PC-9 (cell line): ENCODE measurements at regions of chr12 and their contacts with region 1.

Region 1: DNA sequence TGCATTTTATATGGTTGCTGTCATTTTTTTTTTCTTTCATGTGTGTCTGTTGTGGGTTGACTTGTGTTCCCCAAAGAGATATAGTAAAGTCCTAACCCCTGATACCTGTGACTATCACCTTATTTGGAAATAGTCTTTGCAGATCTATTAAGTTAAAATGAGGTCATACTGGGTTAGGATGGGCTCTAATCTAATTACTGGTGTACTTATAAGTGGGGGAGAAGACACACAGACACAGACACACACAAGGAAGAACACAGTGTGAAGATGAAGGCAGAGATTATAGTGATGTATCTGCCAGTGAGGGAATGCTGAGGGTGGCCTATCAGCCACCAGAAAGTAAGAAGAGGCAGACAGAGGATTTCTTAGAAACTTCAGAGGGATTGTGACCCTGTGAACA is 318.4 kb upstream of the ATP2B1 start:
- DNase-seq: no peak
- H3K4me3 ChIP-seq: no peak overlapping the region
- H3K27ac ChIP-seq: no peak overlapping the region
- H3K4me1 ChIP-seq: peaks cover 43% of the 10 kb centered on the region
- H3K27me3 ChIP-seq: no peaks in the 10 kb centered on the region
- CTCF ChIP-seq: no peak

Region 2: DNA sequence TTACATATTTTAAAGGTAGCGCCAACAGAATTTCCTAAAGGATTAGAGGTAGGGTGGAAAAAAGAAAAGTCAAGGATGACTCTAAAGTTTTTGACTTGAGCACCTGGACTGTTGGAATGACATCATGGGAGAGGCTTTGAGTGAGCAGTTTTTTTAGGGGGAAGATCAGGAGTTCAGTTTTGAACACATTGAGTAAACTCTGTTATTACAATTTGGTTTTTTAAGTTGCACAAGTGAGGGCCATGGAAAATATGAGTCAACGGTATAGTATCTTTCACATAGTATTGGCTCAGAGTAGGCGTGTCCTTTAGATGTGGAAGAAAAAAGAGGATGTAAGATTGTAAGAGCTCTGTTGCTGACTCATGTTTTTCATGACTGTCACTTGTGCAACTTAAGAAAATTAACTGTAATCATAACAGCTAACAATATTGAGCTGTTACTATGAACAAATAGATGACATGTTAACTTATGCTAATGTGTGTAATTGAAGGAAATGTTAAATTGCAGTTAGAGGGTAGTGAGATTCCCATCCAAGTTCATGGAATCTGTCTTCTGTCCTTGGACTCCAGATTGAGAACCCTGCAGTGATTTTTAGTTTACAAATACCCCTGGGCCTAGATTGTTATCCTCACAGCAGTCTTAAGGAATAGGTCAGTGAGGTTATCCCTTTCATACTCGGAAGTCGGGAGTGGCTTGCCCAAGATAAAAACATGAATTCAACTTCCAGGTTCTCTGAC is 270.3 kb before region 1 on chr12:
- CTCF ChIA-PET with region 1: no interaction called
- POLR2A ChIA-PET with region 1: interaction called, 24 read pairs
- intact Hi-C with region 1: no loop called
- DNase-seq: peak; percentile 29 to 98
- H3K4me3 ChIP-seq: peak overlapping the region; percentile 22; the same call in 1 of the 2 replicates
- H3K27ac ChIP-seq: peak overlapping the region; percentile 98
- H3K4me1 ChIP-seq: peaks cover 40% of the 10 kb centered on the region
- H3K27me3 ChIP-seq: no peaks in the 10 kb centered on the region
- CTCF ChIP-seq: no peak